ENCODE measurements at regions of chr16 and their contacts with region 1.

Region 1: DNA sequence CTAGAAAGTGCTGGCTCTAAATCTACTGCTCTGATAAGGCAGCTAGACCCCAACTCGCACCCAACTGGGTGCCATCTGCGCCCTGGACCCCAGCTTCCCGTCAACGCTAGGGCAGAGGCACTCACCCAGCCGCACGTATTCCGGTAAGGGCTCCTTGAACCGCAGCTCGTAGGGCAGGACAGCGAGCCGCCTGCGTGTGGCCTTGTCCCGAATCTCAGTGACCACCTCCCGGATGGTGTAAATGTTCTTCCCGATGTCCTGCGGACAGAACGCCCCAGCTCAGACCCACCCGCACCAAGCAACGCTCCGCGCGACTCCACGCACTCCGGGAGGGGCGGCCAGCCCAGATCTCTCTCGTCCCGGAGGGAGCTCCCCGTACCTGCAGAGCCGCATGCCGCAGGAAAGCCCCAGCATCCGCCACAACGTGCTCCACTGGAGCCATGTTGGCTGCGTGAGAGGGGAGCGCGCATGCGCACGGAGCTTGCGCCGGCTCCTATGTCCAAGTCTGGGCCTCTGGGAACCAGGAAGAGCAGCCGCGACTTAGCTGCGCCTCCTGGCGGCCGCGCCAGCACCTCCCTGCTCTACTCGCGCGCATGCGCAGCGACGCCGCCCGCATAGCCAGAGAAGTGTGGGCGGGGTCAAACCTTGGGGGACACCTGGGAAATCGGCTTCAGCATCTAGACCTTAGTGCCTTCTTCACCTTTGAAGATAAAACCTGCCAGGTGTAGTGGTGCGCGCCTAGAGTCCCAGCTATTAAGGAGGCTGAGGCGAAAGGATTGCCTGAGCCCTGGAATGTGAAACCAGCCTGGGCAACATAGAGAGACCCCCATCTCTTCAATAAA is at the start of gene NOB1:
- DNase-seq: peak; percentile 94 to 97
- H3K4me3 ChIP-seq: peak within 1 kb of the TSS; percentile 83 to 91
- H3K27ac ChIP-seq: peak within 1 kb of the TSS; percentile 66 to 83
- H3K4me1 ChIP-seq: peaks cover 0 to 13% of the 10 kb centered on the region in 2 donors
- H3K27me3 ChIP-seq: no peaks in the 10 kb centered on the region
- CTCF ChIP-seq: peak; percentile 99 to 100 (median 100)
- POLR2A ChIP-seq: peak; percentile 38 to 65
- total RNA-seq, gene NOB1: 15.9 to 50.5 (median 21.0) TPM

Region 2: DNA sequence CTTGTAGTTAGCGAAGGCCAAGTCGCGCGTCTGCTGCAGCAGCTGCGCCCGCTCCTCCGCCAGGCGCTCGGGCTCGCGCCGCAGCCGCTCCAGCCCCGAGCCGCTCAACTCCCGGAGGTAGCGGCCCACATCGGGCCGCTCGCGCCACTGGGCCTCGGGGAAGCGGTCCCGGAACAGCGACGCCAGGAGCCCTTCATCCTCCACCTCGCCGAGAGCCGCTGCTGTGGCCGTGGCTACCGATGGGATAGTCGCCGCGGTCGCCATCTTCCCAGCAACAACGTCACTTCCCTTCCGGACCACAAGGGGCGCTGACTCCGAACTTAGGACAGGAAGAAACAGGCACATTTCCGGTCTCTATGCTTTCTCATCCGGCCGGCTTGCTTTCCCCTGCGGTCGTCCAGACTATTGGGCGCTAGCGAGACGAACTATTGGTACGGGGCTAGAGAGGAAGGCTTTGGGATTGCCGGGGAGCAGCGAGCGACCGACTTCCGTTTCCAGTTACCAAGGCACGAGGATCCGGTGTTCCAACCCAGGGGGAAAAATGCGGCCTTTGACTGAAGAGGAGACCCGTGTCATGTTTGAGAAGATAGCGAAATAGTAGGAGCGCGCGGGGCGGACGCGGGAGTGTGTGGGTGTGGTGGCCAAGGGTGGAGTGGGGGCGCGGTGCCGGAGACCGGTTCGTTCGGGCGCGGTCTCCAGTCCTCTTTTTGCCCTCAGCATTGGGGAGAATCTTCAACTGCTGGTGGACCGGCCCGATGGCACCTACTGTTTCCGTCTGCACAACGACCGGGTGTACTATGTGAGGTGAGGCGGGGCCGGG is 415.2 kb before region 1 on chr16 and contains the starts of genes COG8 and NIP7:
- intact Hi-C with region 1: no loop called
- DNase-seq: peak; percentile 93 to 95
- H3K4me3 ChIP-seq: peak within 1 kb of the TSS; percentile 75 to 95
- H3K27ac ChIP-seq: peak within 1 kb of the TSS; percentile 85 to 92
- H3K4me1 ChIP-seq: peaks cover 7 to 10% of the 10 kb centered on the region in 2 donors
- H3K27me3 ChIP-seq: no peaks in the 10 kb centered on the region
- CTCF ChIP-seq: peak; percentile 81 to 91 (median 86)
- POLR2A ChIP-seq: peak in 1 of 2 donors; percentile 60
- total RNA-seq, gene COG8: 39.4 to 58.8 (median 43.0) TPM
- total RNA-seq, gene NIP7: 6.2 to 21.7 (median 16.9) TPM

Region 3: GRCh38 chr16:69396187-69397061 is 358.3 kb before region 1 on chr16:
- intact Hi-C with region 1: loop called (anchors 10 kb)
- DNase-seq: peak; percentile 71 to 88
- H3K4me3 ChIP-seq: peak overlapping the region in 1 of 2 donors; percentile 4
- H3K27ac ChIP-seq: peak overlapping the region; percentile 77 to 90
- H3K4me1 ChIP-seq: peaks cover 0 to 9% of the 10 kb centered on the region in 2 donors
- H3K27me3 ChIP-seq: no peaks in the 10 kb centered on the region
- CTCF ChIP-seq: peak; percentile 63 to 82 (median 76)
- POLR2A ChIP-seq: peak in 1 of 2 donors; percentile 5

Region 4: GRCh38 chr16:69709456-69710084 is 45.1 kb before region 1 on chr16:
- intact Hi-C with region 1: loop called (anchors 10 kb)
- DNase-seq: no peak
- H3K4me3 ChIP-seq: no peak overlapping the region
- H3K27ac ChIP-seq: peak overlapping the region; percentile 60 to 76
- H3K4me1 ChIP-seq: no peaks in the 10 kb centered on the region
- H3K27me3 ChIP-seq: no peaks in the 10 kb centered on the region
- CTCF ChIP-seq: peak; percentile 61 to 87 (median 78)
- POLR2A ChIP-seq: no peak

Measured in uterus (tissue), 4 donors.